ENCODE measurements at regions of chr1 and their contacts with region 1.

Region 1: DNA sequence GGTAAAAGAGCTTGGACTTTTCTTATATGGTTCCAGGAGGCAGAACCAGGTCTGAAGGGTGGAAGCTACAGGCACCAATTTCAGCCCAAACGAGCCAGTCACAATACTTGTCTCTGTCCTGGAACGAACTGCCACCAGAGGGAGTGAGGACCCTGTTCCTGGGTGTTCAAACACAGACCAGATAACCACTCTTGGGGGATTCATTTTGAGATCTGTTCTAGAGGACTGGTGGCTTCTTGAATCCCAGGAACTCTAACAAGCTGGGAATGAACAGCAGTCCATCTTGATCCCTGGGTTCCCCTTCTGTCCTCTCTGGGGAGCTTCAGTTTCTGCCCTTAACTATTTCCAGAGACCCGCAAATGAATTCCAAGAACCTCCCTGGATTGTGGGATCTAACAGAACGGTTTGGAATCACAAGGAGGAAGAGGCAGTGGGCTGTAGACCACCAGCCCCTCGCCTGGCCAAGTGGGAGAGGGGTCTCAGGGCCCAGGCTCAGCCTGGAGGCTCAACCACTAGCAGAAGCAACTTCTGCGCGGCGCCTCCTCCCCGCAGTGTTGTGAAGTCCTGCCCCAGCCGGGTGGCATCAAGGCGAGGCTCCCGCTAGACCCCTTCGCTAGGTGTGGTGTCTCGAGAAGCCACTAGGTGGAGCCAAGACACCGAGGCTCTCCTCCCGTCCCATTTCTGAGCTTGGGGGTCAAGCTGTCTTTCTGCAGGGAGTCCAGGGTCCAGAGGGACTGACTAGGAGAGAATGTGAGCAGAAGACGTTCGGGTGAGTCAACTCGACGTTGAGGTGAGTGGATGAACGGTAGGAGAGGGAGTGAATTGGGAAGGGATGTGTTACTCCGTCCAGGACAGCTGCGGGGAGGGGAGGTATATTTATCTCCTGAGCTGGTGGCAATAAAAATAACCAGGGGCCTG is 12.1 kb upstream of the NES start:
- DNase-seq: peak in 1 of 2 donors; percentile 89
- H3K4me3 ChIP-seq: peak overlapping the region in 1 of 2 donors; percentile 41
- H3K27ac ChIP-seq: no peak overlapping the region
- H3K4me1 ChIP-seq: peaks cover 3 to 8% of the 10 kb centered on the region in 2 donors
- H3K27me3 ChIP-seq: peaks cover 8% of the 10 kb centered on the region
- CTCF ChIP-seq: peak; percentile 92 to 97 (median 95)

Region 2: DNA sequence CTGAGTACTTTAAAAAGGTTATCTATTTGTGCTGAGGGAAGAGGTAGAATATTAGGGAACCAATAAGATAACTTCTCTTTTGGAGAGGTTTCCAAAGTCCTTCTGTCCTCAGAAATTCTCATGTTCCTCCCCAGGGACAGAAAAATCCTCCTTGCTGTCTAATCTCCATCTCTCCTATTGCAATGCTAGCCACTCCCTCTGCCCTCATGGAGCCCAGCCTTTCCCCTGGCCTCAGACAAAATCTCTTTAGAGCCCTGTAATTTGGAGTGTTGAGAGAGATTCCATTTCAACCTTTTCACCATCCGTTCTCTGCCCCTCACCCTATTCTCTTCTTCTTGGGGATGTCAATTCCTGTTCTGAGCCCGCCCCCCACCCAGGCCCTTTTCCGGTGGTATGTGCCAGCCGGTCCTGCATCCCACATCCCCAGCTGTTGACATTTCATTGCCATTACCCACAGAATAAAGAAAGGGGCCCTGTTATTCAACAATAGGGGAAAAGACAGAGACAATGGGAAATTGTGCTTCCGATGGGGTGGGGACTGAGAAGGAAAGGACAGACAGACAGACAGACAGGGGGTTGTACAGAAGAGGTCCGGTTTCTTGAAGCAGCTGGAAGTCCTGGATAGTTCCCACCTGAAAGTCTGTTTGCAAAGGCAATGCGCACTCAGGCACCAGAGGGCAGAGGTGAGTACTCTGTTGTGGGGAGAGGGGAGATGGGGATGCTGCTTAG is 70.3 kb before region 1 on chr1 and contains the start of gene HAPLN2:
- intact Hi-C with region 1: no loop called
- DNase-seq: no peak
- H3K4me3 ChIP-seq: no peak within 1 kb of the TSS
- H3K27ac ChIP-seq: no peak within 1 kb of the TSS
- H3K4me1 ChIP-seq: peaks cover 4 to 5% of the 10 kb centered on the region in 2 donors
- H3K27me3 ChIP-seq: peaks cover 8% of the 10 kb centered on the region
- CTCF ChIP-seq: peak in 1 of 3 experiments; percentile 13
- total RNA-seq, gene HAPLN2: 1.4 TPM

Region 3: GRCh38 chr1:156705918-156706656 is 16.8 kb after region 1 on chr1:
- intact Hi-C with region 1: loop called (anchors 1 kb)
- DNase-seq: peak; percentile 19 to 85
- H3K4me3 ChIP-seq: peak overlapping the region; percentile 58 to 69
- H3K27ac ChIP-seq: peak overlapping the region; percentile 69 to 76
- H3K4me1 ChIP-seq: peaks cover 10 to 38% of the 10 kb centered on the region in 2 donors
- H3K27me3 ChIP-seq: no peaks in the 10 kb centered on the region
- CTCF ChIP-seq: peak; percentile 87 to 95 (median 91)

Region 4: GRCh38 chr1:156892190-156893047 is 203.1 kb after region 1 on chr1:
- intact Hi-C with region 1: loop called (anchors 10 kb)
- DNase-seq: peak; percentile 36 to 92
- H3K4me3 ChIP-seq: peak overlapping the region; percentile 31 to 70
- H3K27ac ChIP-seq: peak overlapping the region; percentile 92 to 94
- H3K4me1 ChIP-seq: peaks cover 6 to 16% of the 10 kb centered on the region in 2 donors
- H3K27me3 ChIP-seq: no peaks in the 10 kb centered on the region
- CTCF ChIP-seq: peak; percentile 75 to 84 (median 77)